CD8-positive, alpha-beta T cell (primary cell): ENCODE measurements at regions of chr19 and their contacts with region 1.

Region 1: GRCh38 chr19:36489118-36489919 is at the start of gene ZNF566:
- DNase-seq: peak; percentile 84 to 98 (median 91)
- ATAC-seq: peak; percentile 88
- H3K4me3 ChIP-seq: peak within 1 kb of the TSS; percentile 84 to 93
- H3K4me3 Mint-ChIP-seq: peak within 1 kb of the TSS; percentile 99
- H3K27ac ChIP-seq: peak within 1 kb of the TSS; percentile 79 to 96
- H3K27ac Mint-ChIP-seq: peak within 1 kb of the TSS; percentile 96
- H3K4me1 ChIP-seq: peaks cover 6% of the 10 kb centered on the region
- H3K4me1 Mint-ChIP-seq: peaks cover 33% of the 10 kb centered on the region
- H3K27me3 ChIP-seq: no peaks in the 10 kb centered on the region
- H3K27me3 Mint-ChIP-seq: no peaks in the 10 kb centered on the region
- CTCF ChIP-seq: no peak
- total RNA-seq, gene ZNF566: 5.8 to 7.0 TPM

Region 2: DNA sequence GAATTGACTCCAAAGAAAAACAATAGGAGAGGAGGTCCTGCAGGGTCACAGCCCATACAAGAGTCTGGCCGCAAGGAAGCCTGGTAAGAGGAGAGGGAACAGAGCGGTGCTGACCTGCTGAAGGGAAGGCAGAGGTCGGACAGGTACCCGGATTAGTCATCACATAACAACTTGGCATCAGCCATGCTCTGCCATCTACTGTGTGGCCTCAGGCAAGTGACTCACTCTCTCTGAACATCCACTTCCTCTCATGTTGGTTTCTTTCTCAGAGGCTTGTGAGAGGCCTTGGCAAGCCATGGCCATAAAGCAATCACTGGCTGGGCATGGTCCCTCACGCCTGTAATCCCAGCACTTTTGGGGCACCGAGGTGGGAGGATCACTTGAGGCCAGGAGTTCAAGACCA is 356.8 kb before region 1 on chr19:
- CTCF ChIA-PET with region 1: no interaction called
- POLR2A ChIA-PET with region 1: no interaction called
- intact Hi-C with region 1: loop called in 1 of 2 experiments (anchors 5 kb)
- DNase-seq: peak in 4 of 9 experiments; percentile 19 to 60 (median 37)
- ATAC-seq: no peak
- H3K4me3 ChIP-seq: no peak overlapping the region
- H3K4me3 Mint-ChIP-seq: no peak overlapping the region
- H3K27ac ChIP-seq: peak overlapping the region in 1 of 2 experiments; percentile 54
- H3K27ac Mint-ChIP-seq: no peak overlapping the region
- H3K4me1 ChIP-seq: peaks cover 5% of the 10 kb centered on the region
- H3K4me1 Mint-ChIP-seq: peaks cover 15% of the 10 kb centered on the region
- H3K27me3 ChIP-seq: no peaks in the 10 kb centered on the region
- H3K27me3 Mint-ChIP-seq: no peaks in the 10 kb centered on the region
- CTCF ChIP-seq: no peak

Region 3: DNA sequence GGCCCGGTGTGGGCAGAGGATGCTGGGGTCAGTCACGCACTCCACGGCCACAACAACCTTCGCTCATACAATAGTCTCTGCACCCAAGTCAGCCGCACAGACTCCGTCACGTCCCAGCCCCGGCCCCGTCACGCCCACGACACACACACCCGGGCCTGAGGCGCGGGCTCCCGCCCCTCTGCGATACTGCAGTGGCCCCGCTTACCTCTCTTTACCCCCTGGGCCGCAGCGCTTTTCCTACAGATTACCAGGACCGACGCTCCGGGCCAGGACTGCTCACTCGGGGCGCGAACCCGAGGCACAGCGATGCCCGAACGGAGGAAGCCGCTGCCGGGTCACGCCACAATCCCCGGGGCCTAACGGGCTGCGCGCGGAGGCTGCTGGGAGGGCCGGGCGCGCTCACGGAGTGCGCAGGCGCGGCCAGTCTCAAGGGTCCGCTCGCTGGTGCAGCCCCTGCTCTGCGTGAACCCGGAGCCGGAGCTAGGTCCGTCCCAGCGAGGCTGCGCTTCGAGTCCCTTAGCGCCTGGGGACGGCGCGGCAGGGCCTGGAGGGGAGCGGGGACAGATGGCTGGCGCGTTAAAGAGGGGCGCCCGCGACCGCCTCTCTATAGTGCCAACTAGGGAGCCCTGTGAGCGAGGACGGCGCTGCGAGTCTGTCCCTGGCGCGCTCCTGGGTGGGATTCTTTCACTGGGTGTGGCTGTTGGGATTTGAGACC is 70.9 kb before region 1 on chr19 and contains the start of gene ZFP82:
- CTCF ChIA-PET with region 1: no interaction called
- POLR2A ChIA-PET with region 1: no interaction called
- intact Hi-C with region 1: loop called (anchors 1 to 2 kb)
- DNase-seq: peak; percentile 56 to 87 (median 75)
- ATAC-seq: peak; percentile 88
- H3K4me3 ChIP-seq: peak within 1 kb of the TSS; percentile 95
- H3K4me3 Mint-ChIP-seq: peak within 1 kb of the TSS; percentile 90
- H3K27ac ChIP-seq: peak within 1 kb of the TSS; percentile 76 to 91
- H3K27ac Mint-ChIP-seq: peak within 1 kb of the TSS; percentile 93
- H3K4me1 ChIP-seq: peaks cover 19% of the 10 kb centered on the region
- H3K4me1 Mint-ChIP-seq: peaks cover 32% of the 10 kb centered on the region
- H3K27me3 ChIP-seq: peaks cover 0 to 10% of the 10 kb centered on the region in 2 experiments
- H3K27me3 Mint-ChIP-seq: peaks cover 14% of the 10 kb centered on the region
- CTCF ChIP-seq: no peak
- total RNA-seq, gene ZFP82: 5.3 to 5.6 TPM

Region 4: GRCh38 chr19:36460046-36460445 is 29.3 kb before region 1 on chr19:
- CTCF ChIA-PET with region 1: no interaction called
- POLR2A ChIA-PET with region 1: no interaction called
- intact Hi-C with region 1: no loop called
- DNase-seq: no peak
- ATAC-seq: no peak
- H3K4me3 ChIP-seq: no peak overlapping the region
- H3K4me3 Mint-ChIP-seq: no peak overlapping the region
- H3K27ac ChIP-seq: no peak overlapping the region
- H3K27ac Mint-ChIP-seq: no peak overlapping the region
- H3K4me1 ChIP-seq: no peaks in the 10 kb centered on the region
- H3K4me1 Mint-ChIP-seq: no peaks in the 10 kb centered on the region
- H3K27me3 ChIP-seq: no peaks in the 10 kb centered on the region
- H3K27me3 Mint-ChIP-seq: no peaks in the 10 kb centered on the region
- CTCF ChIP-seq: no peak

Region 5: DNA sequence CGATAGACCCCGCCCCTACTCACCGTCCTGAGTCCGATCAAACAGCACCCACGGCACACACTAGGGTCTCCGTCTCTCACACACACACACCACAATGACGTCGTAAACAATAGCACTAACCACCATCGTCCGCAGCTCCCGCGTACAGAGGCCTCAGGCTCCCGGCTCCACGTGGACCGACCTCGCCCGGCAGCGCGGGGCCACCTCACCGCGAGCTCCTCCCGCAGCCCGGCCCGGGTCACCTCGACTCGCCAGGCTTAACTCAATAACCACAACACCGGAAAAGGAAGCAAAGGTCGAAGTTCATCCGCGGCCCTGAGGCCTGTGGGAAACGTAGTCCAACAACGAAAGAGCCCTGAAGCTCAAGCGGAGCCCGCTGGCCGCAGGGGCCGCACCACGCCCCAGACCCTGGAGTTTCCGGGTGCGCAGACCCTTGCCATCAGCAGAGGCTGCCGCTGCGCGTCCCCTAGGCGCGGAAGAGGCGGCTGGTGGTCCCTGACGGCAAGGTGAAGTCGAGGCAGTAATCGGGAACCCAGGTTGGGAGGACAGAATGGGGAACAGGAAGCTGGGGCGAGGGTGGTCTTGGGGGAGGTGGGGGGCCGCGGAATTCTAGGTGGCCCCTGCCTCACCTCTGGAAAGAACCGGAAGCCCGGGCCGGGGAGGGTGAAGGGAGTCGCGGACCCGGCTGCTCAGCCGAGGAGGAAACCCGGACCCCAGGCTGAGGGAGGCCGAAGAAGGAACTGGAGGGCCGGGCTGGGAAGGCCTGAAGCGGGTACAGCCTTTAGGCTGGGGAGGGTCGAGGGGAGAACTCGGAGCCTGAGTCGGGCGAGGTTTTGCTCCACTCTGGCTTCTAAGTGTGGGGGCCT is 83.9 kb after region 1 on chr19 and contains the start of gene ZNF529:
- CTCF ChIA-PET with region 1: no interaction called
- POLR2A ChIA-PET with region 1: interaction called, 4 read pairs
- intact Hi-C with region 1: loop called (anchors 1 kb)
- DNase-seq: peak; percentile 75 to 98 (median 85)
- ATAC-seq: peak; percentile 93
- H3K4me3 ChIP-seq: peak within 1 kb of the TSS; percentile 87 to 99
- H3K4me3 Mint-ChIP-seq: peak within 1 kb of the TSS; percentile 87
- H3K27ac ChIP-seq: peak within 1 kb of the TSS; percentile 96 to 98
- H3K27ac Mint-ChIP-seq: peak within 1 kb of the TSS; percentile 99
- H3K4me1 ChIP-seq: peaks cover 19% of the 10 kb centered on the region
- H3K4me1 Mint-ChIP-seq: peaks cover 45% of the 10 kb centered on the region
- H3K27me3 ChIP-seq: no peaks in the 10 kb centered on the region
- H3K27me3 Mint-ChIP-seq: no peaks in the 10 kb centered on the region
- CTCF ChIP-seq: no peak
- total RNA-seq, gene ZNF529: 44.0 to 46.4 TPM

Region 6: GRCh38 chr19:36665832-36666231 is 176.5 kb after region 1 on chr19:
- CTCF ChIA-PET with region 1: no interaction called
- POLR2A ChIA-PET with region 1: interaction called, 4 read pairs
- intact Hi-C with region 1: loop called in 1 of 2 experiments (anchors 1 kb)
- DNase-seq: peak in 1 of 9 experiments; percentile 8
- ATAC-seq: no peak
- H3K4me3 ChIP-seq: peak overlapping the region; percentile 62 to 63
- H3K4me3 Mint-ChIP-seq: peak overlapping the region; percentile 98
- H3K27ac ChIP-seq: peak overlapping the region; percentile 59 to 72
- H3K27ac Mint-ChIP-seq: peak overlapping the region; percentile 73
- H3K4me1 ChIP-seq: peaks cover 8% of the 10 kb centered on the region
- H3K4me1 Mint-ChIP-seq: peaks cover 35% of the 10 kb centered on the region
- H3K27me3 ChIP-seq: no peaks in the 10 kb centered on the region
- H3K27me3 Mint-ChIP-seq: no peaks in the 10 kb centered on the region
- CTCF ChIP-seq: no peak

Region 7: DNA sequence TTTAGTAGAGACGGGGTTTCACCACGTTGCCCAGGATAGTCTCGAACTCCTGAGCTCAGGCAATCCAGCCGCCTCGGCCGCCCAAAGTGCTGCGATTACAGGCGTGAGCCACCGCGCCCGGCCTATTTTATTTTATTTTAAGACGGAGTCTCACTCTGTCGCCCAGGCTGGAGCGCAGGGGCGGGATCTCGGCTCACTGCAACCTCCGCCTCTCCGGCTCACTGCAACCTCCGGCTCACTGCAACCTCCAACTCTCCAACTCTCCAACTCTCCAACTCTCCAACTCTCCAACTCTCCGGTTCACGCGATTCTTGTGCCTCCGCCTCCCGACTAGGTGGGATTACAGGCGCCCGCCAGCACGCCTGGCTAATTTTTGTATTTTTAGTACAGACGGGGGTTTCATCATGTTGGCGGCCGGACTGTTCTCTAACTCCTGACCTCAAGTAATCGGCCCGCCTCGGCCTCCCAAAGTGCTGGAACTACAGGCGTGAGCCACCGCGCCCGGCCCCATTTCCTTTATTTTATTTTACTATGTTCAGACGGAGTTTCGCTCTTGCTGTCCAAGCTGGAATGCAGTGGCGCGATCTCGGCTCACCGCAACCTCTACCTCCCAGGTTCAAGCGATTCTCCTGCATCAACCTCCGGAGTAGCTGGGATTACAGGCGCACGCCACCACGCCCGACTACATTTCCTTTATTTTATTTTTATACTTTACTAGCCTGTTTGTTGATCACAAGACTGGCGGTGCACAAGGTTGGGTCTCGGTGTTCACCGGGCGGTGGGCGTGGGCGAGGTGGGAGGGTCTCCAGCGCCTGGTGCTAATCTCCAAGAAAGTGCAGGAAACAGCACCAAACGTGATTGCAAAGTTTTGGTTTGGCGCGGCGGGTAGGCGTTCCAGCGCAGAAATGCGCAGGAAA is 307.0 kb after region 1 on chr19:
- CTCF ChIA-PET with region 1: no interaction called
- POLR2A ChIA-PET with region 1: interaction called, 3 read pairs
- intact Hi-C with region 1: loop called in 1 of 2 experiments (anchors 1 kb)
- DNase-seq: no peak
- ATAC-seq: no peak
- H3K4me3 ChIP-seq: peak overlapping the region; percentile 92 to 97
- H3K4me3 Mint-ChIP-seq: peak overlapping the region; percentile 97
- H3K27ac ChIP-seq: peak overlapping the region; percentile 76 to 90
- H3K27ac Mint-ChIP-seq: peak overlapping the region; percentile 98
- H3K4me1 ChIP-seq: peaks cover 3% of the 10 kb centered on the region
- H3K4me1 Mint-ChIP-seq: peaks cover 21% of the 10 kb centered on the region
- H3K27me3 ChIP-seq: no peaks in the 10 kb centered on the region
- H3K27me3 Mint-ChIP-seq: peaks cover 6% of the 10 kb centered on the region
- CTCF ChIP-seq: no peak

Region 8: DNA sequence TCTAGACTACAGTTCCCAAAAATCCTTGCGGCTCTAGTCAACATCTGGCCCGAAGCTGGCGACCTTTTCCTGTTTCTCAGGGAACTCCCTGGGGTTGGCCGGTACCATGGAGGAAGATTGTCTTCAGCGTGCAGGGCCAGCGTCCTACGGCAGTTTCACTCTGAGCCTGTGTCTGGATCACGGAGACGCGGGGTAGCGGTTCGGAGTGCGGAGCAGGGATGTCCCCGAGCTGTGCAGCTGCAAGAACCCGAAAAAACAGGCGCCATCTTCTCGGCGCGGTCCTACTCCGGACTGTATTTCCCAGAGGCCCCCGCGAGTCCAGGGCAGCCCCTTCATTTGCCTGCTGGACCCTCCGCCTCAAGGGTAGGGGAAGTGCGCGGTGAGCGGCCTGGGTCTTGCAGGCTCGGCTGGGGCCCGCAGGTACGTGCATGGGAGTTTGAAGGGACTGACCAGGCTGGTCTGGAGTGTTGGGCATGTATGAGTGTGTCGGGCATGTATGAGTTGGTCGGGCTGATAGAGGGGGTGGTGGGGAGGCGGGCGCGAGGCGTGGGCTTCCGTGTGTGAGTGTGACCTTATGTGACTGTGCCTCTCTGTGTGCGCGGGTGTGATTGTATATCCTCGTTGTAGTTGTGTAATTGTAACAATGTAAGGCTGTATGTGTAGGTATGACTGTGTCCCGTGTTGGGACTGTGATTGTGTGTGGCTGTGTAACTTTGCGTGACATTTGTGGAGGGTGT is 728.7 kb after region 1 on chr19 and contains the start of gene ZNF383:
- CTCF ChIA-PET with region 1: no interaction called
- POLR2A ChIA-PET with region 1: no interaction called
- intact Hi-C with region 1: loop called in 1 of 2 experiments (anchors 5 kb)
- DNase-seq: peak; percentile 68 to 92 (median 82)
- ATAC-seq: peak; percentile 88
- H3K4me3 ChIP-seq: peak within 1 kb of the TSS; percentile 71 to 92
- H3K4me3 Mint-ChIP-seq: peak within 1 kb of the TSS; percentile 87
- H3K27ac ChIP-seq: peak within 1 kb of the TSS; percentile 69 to 92
- H3K27ac Mint-ChIP-seq: peak within 1 kb of the TSS; percentile 93
- H3K4me1 ChIP-seq: peaks cover 11% of the 10 kb centered on the region
- H3K4me1 Mint-ChIP-seq: peaks cover 31% of the 10 kb centered on the region
- H3K27me3 ChIP-seq: no peaks in the 10 kb centered on the region
- H3K27me3 Mint-ChIP-seq: no peaks in the 10 kb centered on the region
- CTCF ChIP-seq: no peak
- total RNA-seq, gene ZNF383: 17.5 to 18.9 TPM